ENCODE measurements at regions of chr3 and their contacts with region 1.

Region 1: GRCh38 chr3:13346481-13347389 is 73.4 kb downstream of the NUP210 start:
- DNase-seq: peak; percentile 53 to 91 (median 75)
- ATAC-seq: peak; percentile 90
- H3K4me3 ChIP-seq: peak overlapping the region in 1 of 2 experiments; percentile 14
- H3K4me3 Mint-ChIP-seq: peak overlapping the region; percentile 42
- H3K27ac ChIP-seq: peak overlapping the region; percentile 18 to 55
- H3K27ac Mint-ChIP-seq: peak overlapping the region; percentile 88
- H3K4me1 ChIP-seq: peaks cover 49% of the 10 kb centered on the region
- H3K4me1 Mint-ChIP-seq: peaks cover 61% of the 10 kb centered on the region
- H3K27me3 ChIP-seq: no peaks in the 10 kb centered on the region
- H3K27me3 Mint-ChIP-seq: no peaks in the 10 kb centered on the region
- CTCF ChIP-seq: peak; percentile 44

Region 2: GRCh38 chr3:12729051-12729651 is 617.6 kb before region 1 on chr3:
- CTCF ChIA-PET with region 1: no interaction called
- POLR2A ChIA-PET with region 1: no interaction called
- intact Hi-C with region 1: no loop called
- DNase-seq: no peak
- ATAC-seq: no peak
- H3K4me3 ChIP-seq: no peak overlapping the region
- H3K4me3 Mint-ChIP-seq: no peak overlapping the region
- H3K27ac ChIP-seq: no peak overlapping the region
- H3K27ac Mint-ChIP-seq: no peak overlapping the region
- H3K4me1 ChIP-seq: no peaks in the 10 kb centered on the region
- H3K4me1 Mint-ChIP-seq: no peaks in the 10 kb centered on the region
- H3K27me3 ChIP-seq: no peaks in the 10 kb centered on the region
- H3K27me3 Mint-ChIP-seq: peaks cover 6% of the 10 kb centered on the region
- CTCF ChIP-seq: no peak

Region 3: DNA sequence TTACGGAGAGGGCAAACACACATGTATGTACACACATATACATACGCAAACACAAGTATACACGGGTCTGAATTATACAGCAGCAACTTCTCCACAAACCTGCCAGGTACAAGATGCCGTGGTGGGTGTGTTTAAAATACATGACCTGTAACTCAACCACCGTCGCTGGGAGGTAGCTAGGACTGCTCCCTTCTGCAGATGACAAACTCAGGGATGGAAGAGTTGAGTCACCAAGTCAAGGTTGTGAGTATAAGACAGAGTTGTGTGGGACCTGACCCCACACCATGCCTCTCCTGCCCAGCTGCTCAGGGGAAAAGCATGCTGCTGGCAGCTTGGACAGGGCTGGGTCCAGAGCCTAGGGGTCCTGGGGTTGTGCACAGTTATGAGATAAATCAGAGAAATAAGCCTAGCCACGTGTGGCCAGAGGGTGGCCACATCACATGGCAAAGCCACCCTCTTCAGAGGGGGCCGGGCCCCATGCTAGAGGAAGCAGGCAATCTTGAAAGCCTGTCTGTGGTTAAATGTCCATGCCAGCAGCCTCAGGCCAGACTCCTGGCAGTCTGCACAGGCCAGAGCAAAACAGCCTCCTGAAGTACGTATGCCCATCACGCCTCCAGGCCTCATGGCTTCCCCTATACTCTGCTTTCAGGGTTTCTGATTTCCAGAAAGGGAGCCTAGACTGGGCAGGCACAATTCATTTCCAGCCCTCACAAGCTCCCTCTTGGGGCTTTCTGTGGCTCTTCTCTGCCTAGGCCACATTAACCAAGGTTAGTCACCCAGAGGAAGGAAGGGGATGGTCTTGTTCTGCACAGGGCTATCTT is 397.6 kb before region 1 on chr3:
- CTCF ChIA-PET with region 1: no interaction called
- POLR2A ChIA-PET with region 1: no interaction called
- intact Hi-C with region 1: no loop called
- DNase-seq: peak in 4 of 9 experiments; percentile 12 to 60 (median 34)
- ATAC-seq: peak; percentile 72
- H3K4me3 ChIP-seq: no peak overlapping the region
- H3K4me3 Mint-ChIP-seq: no peak overlapping the region
- H3K27ac ChIP-seq: no peak overlapping the region
- H3K27ac Mint-ChIP-seq: no peak overlapping the region
- H3K4me1 ChIP-seq: peaks cover 36% of the 10 kb centered on the region
- H3K4me1 Mint-ChIP-seq: peaks cover 53% of the 10 kb centered on the region
- H3K27me3 ChIP-seq: no peaks in the 10 kb centered on the region
- H3K27me3 Mint-ChIP-seq: no peaks in the 10 kb centered on the region
- CTCF ChIP-seq: no peak

Region 4: DNA sequence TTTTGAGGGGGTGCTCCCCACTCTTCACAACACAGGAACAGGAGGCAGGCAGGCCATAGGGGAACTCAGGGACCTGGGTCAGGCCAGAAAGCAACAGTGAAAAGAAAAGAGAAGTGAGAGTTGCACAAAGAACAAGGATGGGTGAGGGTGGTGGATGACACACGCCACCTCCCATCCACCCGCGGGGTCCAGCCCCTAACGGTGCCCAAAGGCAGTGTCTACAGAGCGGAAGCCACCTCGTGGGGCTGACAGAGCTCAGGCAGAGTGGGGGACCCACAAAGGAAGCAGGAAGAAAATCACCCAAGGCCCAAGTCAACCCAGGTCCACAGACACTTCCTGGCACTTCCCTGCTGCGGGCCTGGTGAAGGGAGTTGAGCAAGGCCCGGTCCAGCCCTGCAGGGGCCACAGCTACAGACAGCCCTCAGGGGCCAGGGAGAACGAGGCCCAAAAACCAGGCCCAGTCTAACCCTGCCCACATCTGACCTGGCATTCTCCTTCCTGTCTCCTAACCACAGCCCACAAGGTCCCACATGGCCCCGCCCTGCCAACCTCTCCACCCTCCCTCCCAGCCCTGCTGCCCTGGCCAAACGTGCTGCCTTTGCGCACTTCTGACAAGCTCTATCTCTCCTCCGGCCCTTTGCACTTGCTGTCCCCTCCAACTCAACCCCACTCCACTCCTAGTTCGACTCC is 67.5 kb after region 1 on chr3:
- CTCF ChIA-PET with region 1: interaction called, 9 read pairs
- POLR2A ChIA-PET with region 1: interaction called, 4 read pairs
- intact Hi-C with region 1: loop called (anchors 1 to 5 kb)
- DNase-seq: peak; percentile 48 to 91 (median 79)
- ATAC-seq: peak; percentile 91
- H3K4me3 ChIP-seq: peak overlapping the region; percentile 19 to 29
- H3K4me3 Mint-ChIP-seq: peak overlapping the region; percentile 75
- H3K27ac ChIP-seq: peak overlapping the region; percentile 51 to 89
- H3K27ac Mint-ChIP-seq: peak overlapping the region; percentile 96
- H3K4me1 ChIP-seq: peaks cover 60% of the 10 kb centered on the region
- H3K4me1 Mint-ChIP-seq: peaks cover 69% of the 10 kb centered on the region
- H3K27me3 ChIP-seq: no peaks in the 10 kb centered on the region
- H3K27me3 Mint-ChIP-seq: no peaks in the 10 kb centered on the region
- CTCF ChIP-seq: no peak

Region 5: DNA sequence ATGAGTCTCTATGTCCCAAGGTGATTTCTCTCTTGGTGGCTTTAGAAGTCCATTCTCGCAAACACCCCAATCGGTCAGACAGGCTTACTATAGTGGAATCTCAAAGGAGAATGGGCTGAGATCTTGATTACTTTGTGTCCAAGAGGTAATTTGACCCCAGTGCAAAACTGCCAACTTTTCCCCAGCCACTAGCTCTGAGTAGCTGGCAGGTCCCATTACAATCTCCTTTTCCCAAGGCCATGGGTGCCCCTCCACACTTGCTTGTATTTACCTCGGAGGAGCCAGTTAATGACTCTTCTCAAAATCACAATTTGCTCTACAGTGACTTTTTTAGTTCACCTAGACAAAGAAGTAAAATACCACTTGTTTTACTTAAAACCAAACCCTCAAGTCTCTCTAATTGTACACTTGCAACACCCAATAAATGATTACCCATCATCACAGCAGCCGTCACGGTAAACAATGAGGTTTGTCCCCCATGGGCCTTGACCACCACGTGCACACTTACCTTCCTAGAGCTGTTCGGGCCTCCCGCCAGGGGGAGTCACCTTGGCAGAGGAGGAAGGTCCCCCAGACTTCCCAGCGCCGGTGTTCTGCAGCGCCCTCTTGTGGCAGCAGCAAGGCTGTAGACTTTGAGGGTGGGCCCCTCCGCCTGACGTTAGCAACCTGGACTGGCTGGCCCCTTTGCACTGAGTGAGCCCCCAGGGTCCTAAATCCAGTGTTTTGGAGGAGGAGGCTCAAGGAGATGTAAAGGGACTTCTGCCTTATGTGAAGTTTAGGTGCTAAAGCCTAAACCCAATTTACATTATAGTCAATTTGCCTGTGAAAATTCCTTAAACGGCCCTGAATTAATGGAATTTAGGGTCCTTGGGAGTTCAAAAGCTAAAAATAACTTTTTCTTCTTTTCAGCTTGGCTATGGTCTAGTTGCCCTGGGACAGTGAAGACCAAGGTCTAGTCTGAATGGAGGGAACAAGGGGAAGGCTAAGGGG is 114.7 kb after region 1 on chr3:
- CTCF ChIA-PET with region 1: interaction called, 23 read pairs
- POLR2A ChIA-PET with region 1: no interaction called
- intact Hi-C with region 1: no loop called
- DNase-seq: peak; percentile 49 to 86 (median 80)
- ATAC-seq: peak; percentile 98
- H3K4me3 ChIP-seq: no peak overlapping the region
- H3K4me3 Mint-ChIP-seq: no peak overlapping the region
- H3K27ac ChIP-seq: no peak overlapping the region
- H3K27ac Mint-ChIP-seq: peak overlapping the region; percentile 55
- H3K4me1 ChIP-seq: no peaks in the 10 kb centered on the region
- H3K4me1 Mint-ChIP-seq: peaks cover 3% of the 10 kb centered on the region
- H3K27me3 ChIP-seq: no peaks in the 10 kb centered on the region
- H3K27me3 Mint-ChIP-seq: peaks cover 8% of the 10 kb centered on the region
- CTCF ChIP-seq: peak; percentile 90

Region 6: GRCh38 chr3:13648060-13649001 is 301.6 kb after region 1 on chr3:
- CTCF ChIA-PET with region 1: no interaction called
- POLR2A ChIA-PET with region 1: no interaction called
- intact Hi-C with region 1: loop called (anchors 5 kb)
- DNase-seq: peak; percentile 56 to 88 (median 75)
- ATAC-seq: peak; percentile 27
- H3K4me3 ChIP-seq: no peak overlapping the region
- H3K4me3 Mint-ChIP-seq: no peak overlapping the region
- H3K27ac ChIP-seq: no peak overlapping the region
- H3K27ac Mint-ChIP-seq: no peak overlapping the region
- H3K4me1 ChIP-seq: peaks cover 33% of the 10 kb centered on the region
- H3K4me1 Mint-ChIP-seq: peaks cover 39% of the 10 kb centered on the region
- H3K27me3 ChIP-seq: peaks cover 0 to 3% of the 10 kb centered on the region in 2 experiments
- H3K27me3 Mint-ChIP-seq: peaks cover 15% of the 10 kb centered on the region
- CTCF ChIP-seq: peak; percentile 94

Region 7: GRCh38 chr3:14188041-14188754 is 841.5 kb after region 1 on chr3:
- CTCF ChIA-PET with region 1: no interaction called
- POLR2A ChIA-PET with region 1: no interaction called
- intact Hi-C with region 1: no loop called
- DNase-seq: no peak
- ATAC-seq: no peak
- H3K4me3 ChIP-seq: no peak overlapping the region
- H3K4me3 Mint-ChIP-seq: no peak overlapping the region
- H3K27ac ChIP-seq: no peak overlapping the region
- H3K27ac Mint-ChIP-seq: no peak overlapping the region
- H3K4me1 ChIP-seq: peaks cover 3% of the 10 kb centered on the region
- H3K4me1 Mint-ChIP-seq: peaks cover 65% of the 10 kb centered on the region
- H3K27me3 ChIP-seq: no peaks in the 10 kb centered on the region
- H3K27me3 Mint-ChIP-seq: no peaks in the 10 kb centered on the region
- CTCF ChIP-seq: no peak

Measured in CD8-positive, alpha-beta T cell (primary cell).